ENCODE measurements at regions of chr15 and their contacts with region 1.

Region 1: GRCh38 chr15:34367101-34368081 is at the start of gene LPCAT4:
- DNase-seq: peak; percentile 93
- H3K4me3 Mint-ChIP-seq: peak within 1 kb of the TSS; percentile 99
- H3K27ac Mint-ChIP-seq: peak within 1 kb of the TSS; percentile 98
- H3K4me1 Mint-ChIP-seq: peaks cover 50% of the 10 kb centered on the region
- H3K27me3 Mint-ChIP-seq: no peaks in the 10 kb centered on the region
- total RNA-seq, gene LPCAT4: 109 to 117 TPM

Region 2: GRCh38 chr15:34101366-34102175 is 265.8 kb before region 1 on chr15 and contains the starts of genes EMC7 and PGBD4:
- CTCF ChIA-PET with region 1: interaction called, 5 read pairs
- POLR2A ChIA-PET with region 1: interaction called, 14 read pairs
- DNase-seq: peak; percentile 100
- H3K4me3 Mint-ChIP-seq: peak within 1 kb of the TSS; percentile 96
- H3K27ac Mint-ChIP-seq: peak within 1 kb of the TSS; percentile 90
- H3K4me1 Mint-ChIP-seq: peaks cover 37% of the 10 kb centered on the region
- H3K27me3 Mint-ChIP-seq: no peaks in the 10 kb centered on the region
- total RNA-seq, gene EMC7: 78.7 to 81.8 TPM
- total RNA-seq, gene PGBD4: 3.1 to 3.3 TPM

Region 3: GRCh38 chr15:34209421-34210282 is 157.7 kb before region 1 on chr15 and contains the start of gene KATNBL1:
- CTCF ChIA-PET with region 1: interaction called, 31 read pairs
- POLR2A ChIA-PET with region 1: interaction called, 19 read pairs
- DNase-seq: peak; percentile 97
- H3K4me3 Mint-ChIP-seq: peak within 1 kb of the TSS; percentile 91
- H3K27ac Mint-ChIP-seq: peak within 1 kb of the TSS; percentile 77
- H3K4me1 Mint-ChIP-seq: peaks cover 20% of the 10 kb centered on the region
- H3K27me3 Mint-ChIP-seq: no peaks in the 10 kb centered on the region
- total RNA-seq, gene KATNBL1: 40.5 to 42.1 TPM

Region 4: GRCh38 chr15:34241372-34242330 is 125.7 kb before region 1 on chr15:
- CTCF ChIA-PET with region 1: interaction called, 19 read pairs
- POLR2A ChIA-PET with region 1: interaction called, 12 read pairs
- DNase-seq: peak; percentile 26
- H3K4me3 Mint-ChIP-seq: no peak overlapping the region
- H3K27ac Mint-ChIP-seq: no peak overlapping the region
- H3K4me1 Mint-ChIP-seq: peaks cover 29% of the 10 kb centered on the region
- H3K27me3 Mint-ChIP-seq: no peaks in the 10 kb centered on the region

Region 5: DNA sequence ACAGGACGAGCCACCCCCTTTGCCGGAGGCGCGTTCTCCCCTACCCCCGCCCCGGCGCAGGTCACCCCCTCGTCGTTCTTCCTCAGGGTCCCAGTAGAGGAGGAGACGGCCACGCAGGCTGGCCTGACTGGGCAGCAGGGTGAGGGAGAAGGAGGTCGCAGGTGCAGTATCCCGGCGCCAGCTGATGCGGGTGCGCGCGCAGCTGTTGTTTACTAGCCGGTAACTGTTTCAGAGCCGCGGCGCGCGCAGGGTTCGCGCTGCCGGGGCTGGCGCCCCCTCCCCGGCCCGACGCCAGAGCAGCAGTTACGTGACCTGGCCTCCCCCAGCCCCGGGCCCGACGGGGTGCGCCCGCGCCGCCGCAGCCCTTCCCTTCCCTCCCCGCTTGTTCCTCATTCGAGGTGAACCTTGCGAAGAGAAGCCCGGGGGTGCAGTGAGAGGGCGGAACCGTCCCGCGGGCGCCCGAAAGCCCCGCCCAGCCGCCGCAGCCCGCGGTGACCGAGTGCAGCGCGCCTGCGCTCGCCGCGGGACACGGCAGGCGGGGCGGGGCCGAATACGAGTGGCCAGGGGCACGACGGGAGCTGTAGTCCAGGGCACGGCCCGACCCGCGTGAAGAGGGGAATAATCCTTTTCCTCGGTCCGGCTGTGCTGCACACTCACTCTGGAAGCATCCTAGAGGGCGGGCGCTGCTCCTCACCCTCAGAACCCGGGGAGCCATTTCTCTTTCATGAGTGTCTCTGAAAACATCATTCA is 29.7 kb before region 1 on chr15 and contains the start of gene SLC12A6:
- CTCF ChIA-PET with region 1: interaction called, 60 read pairs
- POLR2A ChIA-PET with region 1: interaction called, 92 read pairs
- DNase-seq: peak; percentile 91
- H3K4me3 Mint-ChIP-seq: peak within 1 kb of the TSS; percentile 96
- H3K27ac Mint-ChIP-seq: peak within 1 kb of the TSS; percentile 95
- H3K4me1 Mint-ChIP-seq: peaks cover 65% of the 10 kb centered on the region
- H3K27me3 Mint-ChIP-seq: no peaks in the 10 kb centered on the region
- total RNA-seq, gene SLC12A6: 30.6 to 31.7 TPM

Region 6: DNA sequence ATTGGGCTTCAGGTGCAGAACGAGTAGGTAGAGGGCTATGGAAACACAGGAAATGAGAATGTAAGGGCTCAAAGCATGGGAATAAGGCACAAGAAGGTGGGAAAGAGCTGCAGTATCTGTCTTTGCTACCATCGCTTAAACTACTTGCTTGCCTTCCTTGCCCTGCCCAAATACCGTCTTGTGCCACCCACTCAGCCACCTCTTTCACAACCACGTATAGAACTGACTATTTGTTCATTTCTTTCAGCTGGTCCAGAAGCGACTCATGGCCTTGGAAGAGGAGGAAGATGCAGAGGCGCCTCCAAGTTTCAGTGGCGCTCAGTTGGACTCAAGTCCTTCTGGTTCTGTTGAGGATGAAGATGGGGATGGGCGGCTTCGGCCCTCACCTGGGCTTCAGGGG is 12.2 kb before region 1 on chr15:
- CTCF ChIA-PET with region 1: interaction called, 13 read pairs
- POLR2A ChIA-PET with region 1: interaction called, 20 read pairs
- DNase-seq: no peak
- H3K4me3 Mint-ChIP-seq: no peak overlapping the region
- H3K27ac Mint-ChIP-seq: no peak overlapping the region
- H3K4me1 Mint-ChIP-seq: no peaks in the 10 kb centered on the region
- H3K27me3 Mint-ChIP-seq: no peaks in the 10 kb centered on the region

Region 7: DNA sequence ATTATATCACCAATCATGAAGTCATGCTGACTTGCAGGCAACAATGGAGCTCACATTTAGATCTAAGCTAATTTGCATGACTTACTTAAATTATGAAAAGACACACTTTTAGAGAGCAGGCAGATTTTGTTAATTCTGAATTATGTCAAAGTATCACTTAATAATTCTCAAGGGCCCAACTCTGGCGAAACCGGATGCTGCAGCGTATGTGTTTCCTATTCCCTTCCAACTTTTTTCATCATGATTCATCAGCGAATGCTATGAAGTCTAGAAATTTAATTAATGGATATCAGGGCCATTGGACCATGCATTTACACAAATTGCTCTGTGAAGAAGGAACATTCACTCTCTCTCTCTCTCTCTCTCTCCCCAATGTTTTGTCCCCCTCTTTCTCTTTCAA is 133.7 kb after region 1 on chr15:
- CTCF ChIA-PET with region 1: no interaction called
- POLR2A ChIA-PET with region 1: no interaction called
- DNase-seq: no peak
- H3K4me3 Mint-ChIP-seq: no peak overlapping the region
- H3K27ac Mint-ChIP-seq: no peak overlapping the region
- H3K4me1 Mint-ChIP-seq: no peaks in the 10 kb centered on the region
- H3K27me3 Mint-ChIP-seq: peaks cover 59% of the 10 kb centered on the region

Measured in activated CD4-positive, alpha-beta memory T cell treated with anti-CD3 and anti-CD28 coated beads, Interleukin-2, amount 10 ng/mL, durations not matched to agents 7 days and 5 days (primary cell).